Psoas muscle (tissue), 8 donors: ENCODE measurements at regions of chr19 and their contacts with region 1.

Region 1: GRCh38 chr19:16829010-16829821 is at the start of gene SIN3B:
- DNase-seq: peak; percentile 84 to 92
- ATAC-seq: peak; percentile 90 to 98 (median 94)
- H3K4me3 ChIP-seq: peak within 1 kb of the TSS; percentile 87
- H3K27ac ChIP-seq: peak within 1 kb of the TSS; percentile 85
- H3K4me1 ChIP-seq: peaks cover 22% of the 10 kb centered on the region
- H3K27me3 ChIP-seq: no peaks in the 10 kb centered on the region
- CTCF ChIP-seq: no peak
- total RNA-seq, gene SIN3B: 18.0 to 23.8 (median 20.4) TPM

Region 2: DNA sequence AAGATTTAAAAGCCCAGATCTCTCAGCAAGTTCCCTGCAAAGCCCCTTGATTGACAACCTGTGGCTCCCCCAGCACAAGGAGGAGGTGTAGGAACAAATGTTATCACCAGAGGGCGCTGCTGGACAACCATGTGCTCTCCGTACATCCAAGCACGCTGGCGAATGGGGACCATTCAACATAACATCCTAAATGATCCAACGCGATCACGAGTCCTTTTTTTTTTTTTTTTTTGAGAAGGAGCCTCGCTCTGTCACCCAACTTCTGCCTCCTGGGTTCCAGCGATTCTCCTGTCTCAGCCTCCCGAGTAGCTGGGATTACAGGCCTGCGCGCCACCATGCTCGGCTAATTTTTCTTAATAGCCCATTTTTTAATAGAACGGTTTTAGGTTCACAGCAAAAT is 57.6 kb before region 1 on chr19:
- intact Hi-C with region 1: loop called in 1 of 2 experiments (anchors 5 kb)
- DNase-seq: peak; percentile 58 to 78
- ATAC-seq: peak; percentile 56 to 87 (median 70)
- H3K4me3 ChIP-seq: no peak overlapping the region
- H3K27ac ChIP-seq: no peak overlapping the region
- H3K4me1 ChIP-seq: no peaks in the 10 kb centered on the region
- H3K27me3 ChIP-seq: peaks cover 0 to 7% (median 0%) of the 10 kb centered on the region in 3 donors
- CTCF ChIP-seq: peak; percentile 78

Region 3: GRCh38 chr19:16897154-16897855 is 68.1 kb after region 1 on chr19:
- intact Hi-C with region 1: loop called in 1 of 2 experiments (anchors 5 kb)
- DNase-seq: peak; percentile 92 to 94
- ATAC-seq: peak; percentile 83 to 88 (median 86)
- H3K4me3 ChIP-seq: peak overlapping the region; percentile 69
- H3K27ac ChIP-seq: peak overlapping the region; percentile 65
- H3K4me1 ChIP-seq: peaks cover 4% of the 10 kb centered on the region
- H3K27me3 ChIP-seq: peaks cover 0 to 47% (median 12%) of the 10 kb centered on the region in 3 donors
- CTCF ChIP-seq: no peak